CD4-positive, alpha-beta memory T cell (primary cell): ENCODE measurements at regions of chr4 and their contacts with region 1.

Region 1: DNA sequence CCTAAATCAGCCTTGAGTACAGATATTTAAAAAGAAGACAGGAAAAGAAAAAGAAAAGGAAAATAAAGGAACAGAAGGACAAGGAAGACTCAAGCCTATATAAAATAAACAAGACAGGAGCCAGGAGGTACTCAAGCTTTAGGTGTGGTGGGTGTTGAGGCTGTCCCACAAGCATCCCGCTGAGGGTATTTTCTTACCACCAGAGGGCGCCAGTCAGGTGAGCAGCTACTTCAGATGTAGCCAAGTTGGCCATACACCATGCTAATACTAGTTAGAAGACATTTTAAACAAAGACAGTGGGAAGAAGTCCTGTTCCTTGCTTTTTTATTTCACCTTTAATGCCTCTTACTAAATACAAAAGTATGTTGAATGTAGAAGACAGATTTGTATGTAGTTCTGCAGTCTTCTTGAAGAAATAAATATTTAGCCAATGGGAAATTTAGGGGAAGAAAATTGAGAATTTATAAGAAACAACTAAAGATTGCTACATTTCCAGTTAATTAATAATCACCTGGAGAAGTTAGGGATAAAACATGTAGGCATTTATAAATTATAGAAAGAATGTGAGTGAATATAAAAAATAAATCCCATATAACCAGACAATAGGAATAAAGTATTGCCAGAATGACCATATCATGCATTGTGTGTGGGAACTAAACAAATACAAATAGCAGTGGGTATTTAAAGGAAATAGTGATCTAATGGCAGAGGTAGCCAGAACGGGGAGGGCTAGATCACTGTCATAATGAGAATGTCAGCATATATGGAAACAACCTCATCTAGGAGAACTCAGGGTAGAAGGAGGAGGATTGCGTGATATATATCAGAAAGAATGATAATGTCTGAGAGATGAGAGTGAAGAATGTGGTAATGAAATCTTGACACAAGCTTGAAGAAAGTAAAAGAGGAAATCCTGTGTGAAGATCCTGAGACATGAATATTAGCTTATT is 71.0 kb downstream of the MTHFD2L start:
- DNase-seq: peak; percentile 58 to 68 (median 63)
- H3K4me3 ChIP-seq: no peak overlapping the region
- H3K4me3 Mint-ChIP-seq: no peak overlapping the region
- H3K27ac ChIP-seq: no peak overlapping the region
- H3K27ac Mint-ChIP-seq: no peak overlapping the region
- H3K4me1 ChIP-seq: no peaks in the 10 kb centered on the region
- H3K4me1 Mint-ChIP-seq: no peaks in the 10 kb centered on the region
- H3K27me3 ChIP-seq: no peaks in the 10 kb centered on the region
- H3K27me3 Mint-ChIP-seq: no peaks in the 10 kb centered on the region

Region 2: DNA sequence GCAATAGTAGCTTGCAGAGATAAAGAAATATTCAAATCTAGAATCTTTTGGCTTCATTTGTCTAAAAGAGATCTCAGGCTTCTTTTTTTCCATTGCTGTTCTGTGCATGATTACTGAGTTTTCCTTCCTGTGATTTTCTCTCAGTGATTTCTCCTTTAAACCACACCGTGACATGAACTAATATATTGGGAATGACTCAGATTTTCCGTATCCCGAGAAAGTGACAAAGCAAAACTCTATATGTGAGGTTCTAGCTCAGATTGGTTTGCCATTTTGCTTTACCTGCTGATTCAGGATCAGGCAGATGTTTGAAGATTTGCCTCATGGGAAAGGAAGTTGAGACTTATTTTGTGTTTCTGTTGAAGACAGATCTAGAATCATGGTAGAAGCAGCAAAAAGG is 11.6 kb before region 1 on chr4:
- CTCF ChIA-PET with region 1: interaction called, 12 read pairs
- POLR2A ChIA-PET with region 1: no interaction called
- intact Hi-C with region 1: no loop called
- DNase-seq: no peak
- H3K4me3 ChIP-seq: no peak overlapping the region
- H3K4me3 Mint-ChIP-seq: no peak overlapping the region
- H3K27ac ChIP-seq: no peak overlapping the region
- H3K27ac Mint-ChIP-seq: no peak overlapping the region
- H3K4me1 ChIP-seq: no peaks in the 10 kb centered on the region
- H3K4me1 Mint-ChIP-seq: peaks cover 0 to 7% (median 5%) of the 10 kb centered on the region in 4 donors
- H3K27me3 ChIP-seq: no peaks in the 10 kb centered on the region
- H3K27me3 Mint-ChIP-seq: no peaks in the 10 kb centered on the region

Region 3: DNA sequence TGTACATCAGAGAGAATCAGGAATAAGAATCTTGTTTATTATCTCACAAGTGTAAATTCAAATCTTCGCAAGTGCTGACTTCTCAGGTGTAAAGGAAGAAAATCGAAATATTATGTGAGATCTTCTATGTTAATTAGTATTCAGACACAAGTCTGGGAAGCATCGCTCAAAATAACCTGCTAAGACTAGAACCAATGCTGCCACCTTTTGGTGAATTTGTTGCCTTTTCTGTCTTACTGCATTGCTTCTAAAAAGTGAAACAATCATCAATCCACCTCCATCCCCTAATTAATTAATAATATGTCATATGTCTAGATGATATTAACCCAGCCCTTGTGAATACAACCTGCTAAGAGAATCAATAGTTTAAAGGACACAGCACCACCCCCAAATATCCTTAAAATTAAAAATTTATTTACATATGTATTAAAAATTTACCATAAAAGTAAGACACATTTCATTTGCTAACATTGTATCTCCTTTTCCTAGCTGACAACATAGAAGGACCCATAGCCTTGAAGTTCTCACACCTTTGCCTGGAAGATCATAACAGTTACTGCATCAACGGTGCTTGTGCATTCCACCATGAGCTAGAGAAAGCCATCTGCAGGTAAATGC is 82.8 kb after region 1 on chr4:
- CTCF ChIA-PET with region 1: interaction called, 8 read pairs
- POLR2A ChIA-PET with region 1: no interaction called
- intact Hi-C with region 1: loop called (anchors 1 kb)
- DNase-seq: peak in 4 of 5 donors; percentile 27 to 36 (median 34)
- H3K4me3 ChIP-seq: no peak overlapping the region
- H3K4me3 Mint-ChIP-seq: no peak overlapping the region
- H3K27ac ChIP-seq: no peak overlapping the region
- H3K27ac Mint-ChIP-seq: peak overlapping the region in 1 of 7 donors; percentile 19
- H3K4me1 ChIP-seq: peaks cover 6% of the 10 kb centered on the region
- H3K4me1 Mint-ChIP-seq: peaks cover 6 to 11% (median 8%) of the 10 kb centered on the region in 4 donors
- H3K27me3 ChIP-seq: no peaks in the 10 kb centered on the region
- H3K27me3 Mint-ChIP-seq: peaks cover 2 to 3% of the 10 kb centered on the region in 2 donors

Region 4: GRCh38 chr4:74531963-74532794 is 303.2 kb after region 1 on chr4:
- CTCF ChIA-PET with region 1: interaction called, 3 read pairs
- POLR2A ChIA-PET with region 1: no interaction called
- intact Hi-C with region 1: loop called (anchors 1 kb)
- DNase-seq: peak in 4 of 5 donors; percentile 4 to 22 (median 16)
- H3K4me3 ChIP-seq: no peak overlapping the region
- H3K4me3 Mint-ChIP-seq: no peak overlapping the region
- H3K27ac ChIP-seq: no peak overlapping the region
- H3K27ac Mint-ChIP-seq: peak overlapping the region in 1 of 7 donors; percentile 49
- H3K4me1 ChIP-seq: no peaks in the 10 kb centered on the region
- H3K4me1 Mint-ChIP-seq: no peaks in the 10 kb centered on the region
- H3K27me3 ChIP-seq: no peaks in the 10 kb centered on the region
- H3K27me3 Mint-ChIP-seq: peaks cover 4 to 7% of the 10 kb centered on the region in 2 donors

Region 5: GRCh38 chr4:74623041-74623440 is 394.1 kb after region 1 on chr4:
- CTCF ChIA-PET with region 1: interaction called, 3 read pairs
- POLR2A ChIA-PET with region 1: no interaction called
- intact Hi-C with region 1: loop called (anchors 1 kb)
- DNase-seq: peak in 3 of 5 donors; percentile 6 to 23 (median 9)
- H3K4me3 ChIP-seq: no peak overlapping the region
- H3K4me3 Mint-ChIP-seq: no peak overlapping the region
- H3K27ac ChIP-seq: no peak overlapping the region
- H3K27ac Mint-ChIP-seq: peak overlapping the region in 2 of 7 donors; percentile 2 to 13
- H3K4me1 ChIP-seq: peaks cover 24% of the 10 kb centered on the region
- H3K4me1 Mint-ChIP-seq: peaks cover 10 to 34% (median 18%) of the 10 kb centered on the region in 4 donors
- H3K27me3 ChIP-seq: no peaks in the 10 kb centered on the region
- H3K27me3 Mint-ChIP-seq: peaks cover 6% of the 10 kb centered on the region in 2 donors